Right ventricle myocardium inferior (tissue), 1 donor: ENCODE measurements at regions of chr5 and their contacts with region 1.

Region 1: GRCh38 chr5:76715736-76716455 is at the start of gene F2R:
- DNase-seq: peak; percentile 76
- ATAC-seq: peak; percentile 89
- total RNA-seq, gene F2R: 5.7 TPM

Region 2: GRCh38 chr5:76527685-76528161 is 188.2 kb before region 1 on chr5:
- intact Hi-C with region 1: no loop called
- DNase-seq: no peak
- ATAC-seq: no peak

Region 3: GRCh38 chr5:76641514-76642120 is 74.3 kb before region 1 on chr5:
- intact Hi-C with region 1: loop called (anchors 10 kb)
- DNase-seq: no peak
- ATAC-seq: no peak

Region 4: DNA sequence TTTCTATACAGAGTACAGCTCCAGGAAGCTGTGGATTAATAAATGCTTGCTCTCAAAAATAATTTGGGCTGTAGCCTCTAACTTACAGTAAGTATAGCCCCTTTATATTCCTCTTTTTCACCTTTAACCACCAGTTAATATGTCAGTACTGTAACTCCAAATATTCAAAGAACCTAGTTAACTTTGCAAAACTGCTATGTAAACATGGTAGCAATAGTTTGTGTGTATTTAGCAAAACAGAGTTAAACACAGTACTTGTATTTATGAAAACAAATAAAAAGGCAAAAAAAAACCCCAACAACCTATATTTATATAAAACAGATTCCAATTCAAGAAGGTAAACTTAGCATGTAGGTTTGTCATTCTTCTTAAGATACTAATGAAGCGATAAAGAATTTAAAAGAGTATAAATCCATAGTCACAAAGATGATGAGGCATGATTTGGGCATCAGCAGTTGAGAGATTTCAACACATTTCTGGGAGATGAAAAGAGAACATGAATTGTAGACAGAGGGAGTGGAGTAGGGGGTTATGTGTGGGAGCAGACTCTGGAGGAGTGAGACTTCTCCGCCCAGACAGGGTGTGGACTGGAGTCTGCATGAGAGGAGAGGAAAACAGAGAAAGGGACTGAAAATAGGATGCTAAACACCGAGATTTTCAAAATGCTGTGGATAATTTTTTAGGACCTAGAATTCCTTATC is 56.0 kb after region 1 on chr5:
- intact Hi-C with region 1: loop called (anchors 5 kb)
- DNase-seq: no peak
- ATAC-seq: no peak